ENCODE measurements at regions of chr11 and their contacts with region 1.

Region 1: DNA sequence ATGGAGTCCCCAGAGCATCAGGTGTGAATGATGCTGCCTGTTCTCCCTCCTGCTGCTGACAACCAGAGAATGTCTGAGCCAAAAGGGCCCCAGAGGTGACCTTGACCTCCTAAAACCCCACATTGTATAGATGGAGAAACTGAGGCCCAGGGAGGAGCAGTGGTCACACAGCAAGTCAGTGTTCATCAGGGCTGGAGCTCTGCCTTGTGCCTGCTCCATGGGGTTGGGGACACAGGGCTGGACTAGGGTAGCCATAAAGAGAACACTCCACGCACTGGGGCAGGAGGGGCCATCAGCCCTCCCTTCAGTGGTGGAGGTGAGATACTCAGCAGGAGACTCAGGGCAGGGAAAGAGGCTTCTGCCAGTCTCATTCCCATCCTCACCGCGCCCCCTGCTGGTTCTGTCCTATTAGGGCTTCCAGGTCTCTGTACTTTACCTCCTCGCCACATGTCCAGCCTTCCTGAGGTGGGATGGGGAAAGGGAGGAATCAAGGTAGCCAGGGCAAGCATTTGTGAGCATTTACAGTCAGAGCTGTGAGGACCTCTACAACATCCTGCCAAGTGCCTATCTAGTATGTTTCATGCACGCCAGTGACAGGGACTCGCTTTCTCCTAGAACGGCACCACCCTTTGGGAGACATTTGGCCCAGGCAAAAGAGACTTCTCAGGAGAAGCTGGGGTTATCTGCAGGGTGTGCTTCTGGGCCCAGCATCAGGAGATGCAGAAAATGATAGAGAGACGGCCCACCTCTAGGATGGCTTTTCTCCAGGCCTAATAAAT is 43.2 kb downstream of the NEU3 start:
- DNase-seq: peak; percentile 52
- ATAC-seq: peak; percentile 79
- H3K4me3 ChIP-seq: no peak overlapping the region
- H3K27ac ChIP-seq: no peak overlapping the region
- H3K4me1 ChIP-seq: peaks cover 17 to 29% of the 10 kb centered on the region in 2 experiments
- H3K27me3 ChIP-seq: no peaks in the 10 kb centered on the region
- CTCF ChIP-seq: peak; percentile 76 to 92 (median 81); a peak in 5 of 6 replicates
- POLR2A ChIP-seq: no peak
- RAD21 ChIP-seq: peak; percentile 72

Region 2: DNA sequence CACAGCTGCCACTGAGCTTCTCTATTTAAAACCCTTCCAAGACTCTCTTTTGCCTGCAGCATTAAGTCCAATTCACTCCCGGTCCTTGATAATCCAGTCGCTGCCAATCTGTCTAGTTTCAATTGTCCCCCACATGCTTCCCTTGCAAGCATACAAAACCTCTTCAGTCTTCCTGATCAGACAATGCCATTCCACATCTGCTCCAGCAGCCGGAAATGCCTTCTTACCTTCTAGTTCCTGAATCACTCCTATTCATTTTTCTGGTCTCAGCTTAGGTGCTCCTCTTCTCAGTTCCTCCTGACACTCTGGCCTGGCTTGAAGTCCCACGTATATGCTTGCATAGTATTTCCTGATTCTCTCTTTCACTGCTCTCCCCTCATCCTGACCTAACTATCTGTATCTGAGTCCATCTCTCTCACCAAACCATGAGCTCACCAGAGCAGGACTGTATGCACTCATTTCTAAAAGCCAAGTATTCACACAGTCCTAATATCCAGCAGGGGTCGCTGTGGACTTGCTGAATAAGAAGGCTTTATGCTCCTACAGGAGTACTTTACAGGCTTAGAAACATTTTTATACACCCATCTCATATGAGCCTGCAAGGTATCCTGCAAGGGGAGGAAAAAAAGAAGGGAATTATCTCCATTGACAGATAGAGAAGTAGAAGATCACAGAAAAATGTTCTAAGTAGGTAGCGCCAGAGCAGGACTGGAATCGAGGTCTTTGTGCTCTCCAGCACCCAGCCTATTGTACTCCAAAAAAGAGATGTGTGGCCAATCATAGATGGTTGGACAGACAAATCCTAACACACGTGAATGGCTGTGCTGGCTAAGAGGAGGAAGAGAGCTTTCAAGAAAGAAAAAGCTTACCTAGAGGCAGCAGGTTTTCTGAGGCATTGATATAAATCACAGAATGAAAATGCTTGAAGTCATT is 102.3 kb before region 1 on chr11:
- CTCF ChIA-PET with region 1: interaction called, 5 read pairs
- POLR2A ChIA-PET with region 1: no interaction called
- RAD21 ChIA-PET with region 1: no interaction called
- intact Hi-C with region 1: loop called (anchors 2 kb)
- DNase-seq: peak; percentile 81
- ATAC-seq: peak; percentile 99
- H3K4me3 ChIP-seq: no peak overlapping the region
- H3K27ac ChIP-seq: no peak overlapping the region
- H3K4me1 ChIP-seq: no peaks in the 10 kb centered on the region
- H3K27me3 ChIP-seq: no peaks in the 10 kb centered on the region
- CTCF ChIP-seq: peak; percentile 85 to 99 (median 88)
- POLR2A ChIP-seq: no peak
- RAD21 ChIP-seq: peak; percentile 84

Measured in HCT116 (cell line).